Endothelial cell of umbilical vein (primary cell): ENCODE measurements at regions of chr2 and their contacts with region 1.

Region 1: DNA sequence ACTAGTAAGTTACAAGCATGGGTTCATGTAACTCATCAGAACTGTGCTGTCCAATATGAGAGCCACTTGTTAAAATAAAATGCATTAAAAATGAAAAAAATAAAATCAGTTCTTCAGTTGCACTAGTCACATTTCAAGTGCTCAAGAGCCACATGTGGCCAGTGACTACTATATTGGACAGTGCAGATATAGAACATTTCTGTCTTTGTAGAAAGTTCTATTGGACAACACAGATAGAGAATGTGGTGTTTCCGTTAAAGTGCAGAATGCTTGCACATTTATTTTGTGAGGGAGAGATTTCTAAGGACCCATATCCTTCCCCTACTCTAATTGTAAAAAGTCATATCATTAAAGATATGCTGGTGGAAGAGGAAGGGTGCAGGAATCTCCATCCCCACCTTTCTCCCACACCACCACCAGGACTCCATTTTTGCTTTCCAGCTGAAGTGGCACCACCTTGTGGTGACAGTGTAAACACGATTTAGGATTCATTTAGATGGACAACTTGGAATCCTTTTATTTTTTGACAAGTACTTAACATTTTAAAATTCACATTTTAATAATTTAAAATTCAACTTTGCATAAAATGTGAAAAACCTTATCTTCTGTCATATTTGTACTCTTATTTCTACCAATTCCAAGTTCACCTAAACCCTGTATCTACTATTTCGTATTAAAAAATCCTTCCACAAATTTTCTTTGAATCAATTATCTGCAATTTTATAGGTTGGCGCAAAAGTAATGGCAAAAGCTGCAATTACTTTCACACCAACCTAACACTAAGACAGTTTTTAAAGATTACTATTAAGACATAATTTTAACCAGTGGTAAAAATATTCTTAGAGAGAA is 9.4 kb upstream of the CD302 start:
- DNase-seq: peak; percentile 69
- H3K4me3 ChIP-seq: no peak overlapping the region
- H3K27ac ChIP-seq: no peak overlapping the region
- H3K4me1 ChIP-seq: no peaks in the 10 kb centered on the region
- H3K27me3 ChIP-seq: no peaks in the 10 kb centered on the region
- CTCF ChIP-seq: peak; percentile 62 to 67
- POLR2A ChIP-seq: no peak

Region 2: GRCh38 chr2:159755788-159756187 is 51.6 kb before region 1 on chr2:
- CTCF ChIA-PET with region 1: interaction called, 17 read pairs
- POLR2A ChIA-PET with region 1: no interaction called
- dilution Hi-C with region 1: no loop called
- intact Hi-C with region 1: no loop called
- DNase-seq: peak; percentile 49
- H3K4me3 ChIP-seq: no peak overlapping the region
- H3K27ac ChIP-seq: no peak overlapping the region
- H3K4me1 ChIP-seq: peaks cover 14% of the 10 kb centered on the region
- H3K27me3 ChIP-seq: no peaks in the 10 kb centered on the region
- CTCF ChIP-seq: peak; percentile 36 to 47
- POLR2A ChIP-seq: no peak

Region 3: DNA sequence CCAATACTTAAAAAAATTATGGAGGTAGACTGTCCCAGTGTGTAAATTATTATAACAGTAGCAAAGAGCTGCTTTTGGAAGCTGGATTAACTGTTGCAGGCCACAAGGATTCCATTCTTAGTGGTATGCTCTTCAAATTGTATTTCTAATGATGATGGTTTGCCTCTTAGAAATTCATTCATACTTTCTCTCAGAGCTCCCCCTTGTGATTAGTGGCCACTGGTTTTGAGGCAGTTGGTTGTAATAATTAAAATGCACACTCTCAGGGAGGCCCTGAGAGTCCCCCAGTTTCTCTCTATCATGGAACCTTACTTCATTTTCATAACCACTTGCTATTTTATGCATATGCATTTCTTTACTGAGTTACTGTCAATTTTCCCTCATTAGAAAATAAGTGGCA is 132.5 kb after region 1 on chr2:
- CTCF ChIA-PET with region 1: interaction called, 10 read pairs
- POLR2A ChIA-PET with region 1: no interaction called
- dilution Hi-C with region 1: no loop called
- intact Hi-C with region 1: no loop called
- DNase-seq: peak; percentile 59
- H3K4me3 ChIP-seq: no peak overlapping the region
- H3K27ac ChIP-seq: no peak overlapping the region
- H3K4me1 ChIP-seq: peaks cover 17% of the 10 kb centered on the region
- H3K27me3 ChIP-seq: no peaks in the 10 kb centered on the region
- CTCF ChIP-seq: peak; percentile 12 to 20
- POLR2A ChIP-seq: no peak